HEK293 (cell line): ENCODE measurements at regions of chr5 and their contacts with region 1.

Region 1: GRCh38 chr5:15105796-15106393 is 234.3 kb upstream of the ANKH start:
- H3K4me3 ChIP-seq: no peak overlapping the region
- H3K27ac ChIP-seq: no peak overlapping the region
- H3K4me1 ChIP-seq: no peaks in the 10 kb centered on the region
- CTCF ChIP-seq: no peak

Region 2: DNA sequence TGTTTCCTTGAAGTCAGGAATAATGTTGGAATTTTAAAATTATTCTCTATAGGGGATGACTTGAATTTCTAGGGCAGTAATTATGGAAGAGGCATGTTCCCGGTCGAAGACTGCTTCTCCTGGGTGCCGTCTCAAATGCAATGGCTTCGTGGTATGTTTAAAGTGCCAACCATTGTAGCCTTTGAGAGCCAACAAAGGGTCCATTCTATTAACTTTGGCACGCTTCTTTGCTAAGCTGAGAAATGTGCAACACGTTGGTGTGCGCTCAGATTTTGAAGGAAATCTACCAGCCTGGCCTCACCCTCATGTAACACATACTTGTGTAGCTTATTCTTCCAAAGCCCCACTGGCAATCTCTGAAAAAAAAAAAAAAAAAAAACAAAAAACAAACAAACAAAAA is 13.1 kb before region 1 on chr5:
- CTCF ChIA-PET with region 1: interaction called, 19 read pairs
- POLR2A ChIA-PET with region 1: no interaction called
- H3K4me3 ChIP-seq: no peak overlapping the region
- H3K27ac ChIP-seq: no peak overlapping the region
- H3K4me1 ChIP-seq: no peaks in the 10 kb centered on the region
- CTCF ChIP-seq: no peak

Region 3: GRCh38 chr5:15116996-15117395 is 11.1 kb after region 1 on chr5:
- CTCF ChIA-PET with region 1: interaction called, 10 read pairs
- POLR2A ChIA-PET with region 1: no interaction called
- H3K4me3 ChIP-seq: no peak overlapping the region
- H3K27ac ChIP-seq: no peak overlapping the region
- H3K4me1 ChIP-seq: peaks cover 5% of the 10 kb centered on the region; the same call in 1 of the 2 replicates
- CTCF ChIP-seq: no peak

Region 4: DNA sequence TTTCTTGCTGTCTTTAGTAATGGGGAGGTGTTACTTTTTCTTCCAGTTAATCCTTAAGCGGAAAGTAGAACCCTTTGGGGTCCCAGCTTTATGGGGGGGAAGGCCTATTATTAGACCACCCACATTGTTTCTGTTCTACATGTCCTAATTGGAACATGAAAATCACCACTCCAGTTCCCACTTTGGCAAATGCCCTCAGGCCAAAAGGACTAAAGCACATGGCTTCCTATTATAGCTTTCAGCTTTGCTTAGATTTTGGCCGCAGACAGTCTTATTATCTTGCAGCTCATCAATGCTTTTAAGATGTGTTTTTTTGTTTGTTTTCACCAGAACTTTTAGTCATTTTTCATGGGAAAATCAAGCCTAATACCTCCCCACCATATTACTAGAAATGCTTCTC is 62.5 kb after region 1 on chr5:
- CTCF ChIA-PET with region 1: no interaction called
- POLR2A ChIA-PET with region 1: no interaction called
- H3K4me3 ChIP-seq: no peak overlapping the region
- H3K27ac ChIP-seq: no peak overlapping the region
- H3K4me1 ChIP-seq: no peaks in the 10 kb centered on the region
- CTCF ChIP-seq: no peak

Region 5: DNA sequence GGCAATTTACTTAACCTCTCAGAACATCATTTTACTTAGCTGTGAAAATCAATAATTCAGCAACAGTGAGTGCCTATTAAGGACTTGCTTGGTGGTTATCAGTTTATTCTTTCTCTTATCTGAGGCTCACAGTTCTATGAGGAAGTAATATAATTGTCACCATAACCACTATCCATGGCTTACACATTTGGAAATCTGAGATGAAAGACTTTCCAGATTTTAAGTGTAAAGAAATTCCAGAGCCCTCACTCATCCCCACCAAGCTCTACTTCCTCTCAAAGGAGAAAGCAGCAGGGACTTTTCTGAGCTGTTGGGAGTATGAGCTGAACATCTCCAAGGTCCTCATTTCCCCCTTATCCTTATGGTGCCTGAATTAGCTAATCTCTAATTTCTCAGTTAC is 715.6 kb after region 1 on chr5:
- CTCF ChIA-PET with region 1: interaction called, 19 read pairs
- POLR2A ChIA-PET with region 1: no interaction called
- H3K4me3 ChIP-seq: no peak overlapping the region
- H3K27ac ChIP-seq: no peak overlapping the region
- H3K4me1 ChIP-seq: no peaks in the 10 kb centered on the region
- CTCF ChIP-seq: no peak